ENCODE measurements at regions of chr19 and their contacts with region 1.

Region 1: DNA sequence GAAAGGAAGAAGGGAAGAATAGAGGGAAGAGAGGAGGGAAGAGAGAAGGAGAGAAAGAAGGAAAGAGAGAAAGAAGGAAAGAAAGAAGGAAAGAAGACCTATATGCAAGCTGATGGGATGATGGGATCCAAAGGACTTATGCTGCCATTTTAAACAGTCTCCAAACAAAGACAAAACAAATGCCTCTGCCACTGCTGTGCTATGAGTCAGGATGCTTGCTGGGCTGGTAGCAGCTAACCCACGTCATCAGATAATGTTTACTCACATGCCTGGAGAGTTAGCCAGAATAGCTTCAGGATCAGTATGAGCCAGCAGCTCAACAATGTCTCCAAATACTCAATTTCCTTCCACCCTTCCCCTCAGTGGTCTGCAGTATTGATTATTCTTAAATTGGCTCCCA is 12.0 kb upstream of the ZNF274 start:
- DNase-seq: no peak
- H3K4me3 Mint-ChIP-seq: no peak overlapping the region
- H3K27ac Mint-ChIP-seq: no peak overlapping the region
- H3K4me1 Mint-ChIP-seq: no peaks in the 10 kb centered on the region
- H3K27me3 Mint-ChIP-seq: no peaks in the 10 kb centered on the region
- CTCF ChIP-seq: no peak

Region 2: DNA sequence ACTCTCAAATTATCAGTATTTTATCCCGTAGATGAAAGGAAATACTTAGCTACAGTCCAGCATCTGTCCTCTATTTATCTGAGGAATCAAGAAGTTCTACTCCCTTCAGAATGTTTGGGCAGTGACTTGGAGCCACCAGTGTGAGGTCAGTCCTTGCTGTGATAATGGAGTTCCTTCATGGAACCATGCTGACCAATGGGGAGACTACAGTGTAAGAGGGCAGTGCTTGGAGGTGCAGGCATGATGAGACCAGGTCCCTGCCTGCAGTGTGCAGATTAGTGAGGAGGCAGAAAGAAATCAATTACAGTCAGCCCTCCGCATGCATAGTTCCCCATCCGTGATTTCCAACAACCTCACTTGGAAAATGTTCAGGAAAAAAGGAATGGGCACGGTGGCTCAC is 196.4 kb before region 1 on chr19 and contains the start of gene C19orf18:
- CTCF ChIA-PET with region 1: no interaction called
- intact Hi-C with region 1: no loop called
- DNase-seq: no peak
- H3K4me3 Mint-ChIP-seq: no peak within 1 kb of the TSS
- H3K27ac Mint-ChIP-seq: no peak within 1 kb of the TSS
- H3K4me1 Mint-ChIP-seq: no peaks in the 10 kb centered on the region
- H3K27me3 Mint-ChIP-seq: no peaks in the 10 kb centered on the region
- CTCF ChIP-seq: no peak
- total RNA-seq, gene C19orf18: 2.5 and 2.7 TPM in 2 replicates

Region 3: GRCh38 chr19:58107778-58108545 is 62.9 kb before region 1 on chr19:
- CTCF ChIA-PET with region 1: no interaction called
- intact Hi-C with region 1: loop called (anchors 2 kb)
- DNase-seq: no peak
- H3K4me3 Mint-ChIP-seq: no peak overlapping the region
- H3K27ac Mint-ChIP-seq: no peak overlapping the region
- H3K4me1 Mint-ChIP-seq: no peaks in the 10 kb centered on the region
- H3K27me3 Mint-ChIP-seq: no peaks in the 10 kb centered on the region
- CTCF ChIP-seq: no peak

Region 4: GRCh38 chr19:58182989-58183816 is 12.3 kb after region 1 on chr19 and contains the start of gene ZNF274:
- CTCF ChIA-PET with region 1: no interaction called
- intact Hi-C with region 1: no loop called
- DNase-seq: peak; percentile 98
- H3K4me3 Mint-ChIP-seq: peak within 1 kb of the TSS; percentile 98
- H3K27ac Mint-ChIP-seq: peak within 1 kb of the TSS; percentile 98
- H3K4me1 Mint-ChIP-seq: peaks cover 14% of the 10 kb centered on the region
- H3K27me3 Mint-ChIP-seq: no peaks in the 10 kb centered on the region
- CTCF ChIP-seq: no peak
- total RNA-seq, gene ZNF274: 43.2 and 44.6 TPM in 2 replicates